Esophagus muscularis mucosa (tissue), 4 donors: ENCODE measurements at regions of chr11 and their contacts with region 1.

Region 1: GRCh38 chr11:34344768-34345539 is 12.9 kb downstream of the ABTB2 start:
- DNase-seq: no peak
- H3K4me3 ChIP-seq: no peak overlapping the region
- H3K27ac ChIP-seq: peak overlapping the region; percentile 71 to 79 (median 78)
- H3K4me1 ChIP-seq: peaks cover 52 to 91% (median 83%) of the 10 kb centered on the region in 4 donors
- H3K27me3 ChIP-seq: no peaks in the 10 kb centered on the region
- CTCF ChIP-seq: no peak
- EP300 ChIP-seq: no peak
- POLR2A ChIP-seq: no peak

Region 2: DNA sequence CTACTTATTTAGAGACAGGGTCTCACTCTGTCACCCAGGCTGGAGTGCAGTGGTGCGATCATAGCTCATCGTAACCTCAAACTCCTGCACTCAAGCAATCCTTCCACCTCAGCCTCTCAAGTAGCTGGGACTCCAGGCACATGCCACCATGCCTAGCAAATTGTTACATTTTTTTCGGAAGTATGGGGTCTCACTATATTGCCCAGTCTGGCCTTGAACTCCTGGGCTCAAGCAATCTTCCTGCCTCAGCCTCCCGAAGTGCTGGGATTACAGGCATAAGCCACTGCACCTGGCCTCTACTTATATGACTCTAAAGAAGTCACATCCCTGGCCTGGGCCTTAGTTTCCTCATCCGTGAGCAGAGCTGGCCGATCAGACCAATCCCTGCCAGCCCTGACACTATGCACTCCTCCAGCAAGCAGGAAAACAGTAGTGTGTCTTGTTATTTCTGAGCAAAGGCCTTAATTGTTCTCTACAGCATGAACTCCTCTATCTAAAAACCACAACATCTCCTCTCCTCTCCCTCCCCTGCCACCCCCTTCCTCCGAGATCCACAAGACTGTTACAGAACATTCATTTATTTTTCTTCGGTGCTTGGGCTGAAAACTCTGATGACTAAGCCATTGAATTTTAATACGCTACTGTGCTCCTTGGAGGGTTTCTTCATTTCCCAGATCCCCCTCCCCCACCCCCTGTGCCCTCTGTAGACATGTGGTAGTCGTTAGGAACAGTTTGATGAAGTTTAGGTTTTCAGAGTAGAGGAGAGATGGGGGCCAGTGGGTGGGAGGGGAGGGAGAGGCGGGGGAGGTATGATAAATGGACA is 78.7 kb before region 1 on chr11:
- intact Hi-C with region 1: loop called (anchors 10 kb)
- DNase-seq: no peak
- H3K4me3 ChIP-seq: no peak overlapping the region
- H3K27ac ChIP-seq: peak overlapping the region; percentile 38 to 59 (median 53)
- H3K4me1 ChIP-seq: peaks cover 12 to 43% (median 35%) of the 10 kb centered on the region in 4 donors
- H3K27me3 ChIP-seq: no peaks in the 10 kb centered on the region
- CTCF ChIP-seq: no peak
- EP300 ChIP-seq: no peak
- POLR2A ChIP-seq: no peak